ENCODE measurements at regions of chr7 and their contacts with region 1.

Region 1: GRCh38 chr7:2567679-2568278 is 9.0 kb downstream of the IQCE start:
- DNase-seq: peak; percentile 31 to 71
- H3K4me3 ChIP-seq: no peak overlapping the region
- H3K27ac ChIP-seq: no peak overlapping the region
- H3K4me1 ChIP-seq: peaks cover 0 to 6% (median 2%) of the 10 kb centered on the region in 4 experiments; a peak in 4 of 7 replicates
- H3K27me3 ChIP-seq: no peaks in the 10 kb centered on the region
- CTCF ChIP-seq: peak; percentile 72 to 83 (median 77)
- EP300 ChIP-seq: no peak
- POLR2A ChIP-seq: no peak
- RAD21 ChIP-seq: peak; percentile 91 to 94

Region 2: DNA sequence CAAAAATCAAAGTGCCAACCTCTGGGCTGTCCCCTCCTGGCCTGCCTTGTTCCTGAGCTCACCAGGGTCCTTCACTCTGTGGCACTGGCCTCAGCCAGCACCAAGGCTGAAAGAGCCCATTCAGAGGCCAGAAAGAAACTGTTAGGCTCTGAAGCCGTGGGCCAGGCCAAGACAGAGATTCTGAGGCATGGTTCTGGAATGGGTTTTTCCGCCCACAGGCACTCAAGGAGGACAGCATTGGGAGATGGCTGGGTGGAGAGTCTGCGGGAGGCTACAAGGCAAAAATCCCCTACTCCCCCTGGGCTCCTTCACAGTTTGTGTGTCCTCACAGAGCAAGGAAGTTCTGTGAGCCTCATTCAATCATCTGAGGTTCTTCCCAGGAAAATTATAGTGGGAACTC is 123.3 kb before region 1 on chr7:
- CTCF ChIA-PET with region 1: no interaction called
- POLR2A ChIA-PET with region 1: no interaction called
- DNase-seq: no peak
- H3K4me3 ChIP-seq: no peak overlapping the region
- H3K27ac ChIP-seq: no peak overlapping the region
- H3K4me1 ChIP-seq: no peaks in the 10 kb centered on the region
- H3K27me3 ChIP-seq: no peaks in the 10 kb centered on the region
- CTCF ChIP-seq: no peak
- EP300 ChIP-seq: no peak
- POLR2A ChIP-seq: no peak
- RAD21 ChIP-seq: no peak

Region 3: DNA sequence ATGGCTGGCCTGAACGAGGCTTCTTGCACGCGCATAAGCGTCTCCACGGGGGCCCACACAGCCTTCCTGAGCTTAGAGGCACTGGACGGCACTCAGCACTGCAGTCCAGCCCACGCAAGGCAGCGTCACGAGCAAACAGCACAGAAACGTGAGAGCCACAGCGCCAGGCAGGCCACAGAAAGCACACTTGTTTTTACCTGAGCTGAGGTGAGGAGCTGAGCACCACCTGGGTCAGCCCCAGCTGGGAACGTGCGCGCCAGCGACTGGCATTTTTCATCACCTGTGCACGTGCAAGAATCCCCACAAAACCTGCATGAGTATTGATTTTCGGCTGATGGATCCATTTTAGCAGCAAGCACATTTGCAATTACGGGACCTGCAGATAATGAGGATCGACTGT is 17.7 kb after region 1 on chr7:
- CTCF ChIA-PET with region 1: interaction called, 13 read pairs
- POLR2A ChIA-PET with region 1: no interaction called
- DNase-seq: no peak
- H3K4me3 ChIP-seq: no peak overlapping the region
- H3K27ac ChIP-seq: no peak overlapping the region
- H3K4me1 ChIP-seq: peaks cover 0 to 11% (median 3%) of the 10 kb centered on the region in 4 experiments; a peak in 3 of 7 replicates
- H3K27me3 ChIP-seq: no peaks in the 10 kb centered on the region
- CTCF ChIP-seq: no peak
- EP300 ChIP-seq: no peak
- POLR2A ChIP-seq: no peak
- RAD21 ChIP-seq: no peak

Region 4: DNA sequence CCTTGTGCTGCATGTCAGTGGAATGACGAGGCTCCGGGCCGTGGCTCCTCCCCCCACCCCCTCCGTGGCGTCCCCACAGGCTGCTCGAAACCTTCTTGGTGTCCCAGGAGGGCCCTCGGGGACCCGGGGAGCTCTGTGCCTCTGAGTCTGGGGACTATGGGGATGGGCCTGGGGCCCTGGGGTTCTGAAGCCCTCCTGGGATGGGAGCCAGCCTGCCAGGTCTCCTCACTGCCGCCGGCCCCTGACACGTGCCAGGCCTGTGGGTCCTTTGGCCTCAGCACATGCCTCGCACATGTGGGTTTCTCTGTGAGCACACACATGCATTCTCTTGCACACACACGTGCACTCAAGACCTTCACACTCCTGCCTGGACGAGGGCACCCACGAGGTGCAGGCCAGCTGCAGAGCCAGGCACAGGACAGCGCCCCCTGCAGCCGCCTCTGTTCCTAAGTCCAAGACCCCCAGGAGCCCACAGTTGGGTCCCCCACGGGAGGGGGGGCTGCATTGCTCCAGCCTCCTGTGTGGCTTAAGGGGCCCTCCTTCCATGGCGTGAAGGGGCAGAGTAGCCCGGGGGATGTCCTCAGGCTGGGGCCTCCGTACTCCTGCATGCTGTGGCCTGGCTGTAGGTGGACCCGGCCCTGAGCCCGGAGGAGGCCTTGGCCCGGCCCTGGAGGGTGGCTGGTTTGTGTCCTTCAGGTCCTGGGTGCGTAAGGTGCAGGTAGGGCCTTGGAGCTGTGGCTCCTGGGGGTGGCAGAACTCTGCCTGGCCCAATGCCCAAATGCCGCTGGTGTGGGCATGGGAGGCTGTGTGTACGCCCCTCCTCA is 93.0 kb after region 1 on chr7:
- CTCF ChIA-PET with region 1: interaction called, 27 read pairs
- POLR2A ChIA-PET with region 1: no interaction called
- DNase-seq: peak in 1 of 2 experiments; percentile 71
- H3K4me3 ChIP-seq: no peak overlapping the region
- H3K27ac ChIP-seq: no peak overlapping the region
- H3K4me1 ChIP-seq: peaks cover 0 to 4% (median under 1%) of the 10 kb centered on the region in 4 experiments; a peak in 2 of 7 replicates
- H3K27me3 ChIP-seq: no peaks in the 10 kb centered on the region; a peak in 2 of 7 replicates
- CTCF ChIP-seq: peak in 2 of 3 experiments; percentile 50 to 60; a peak in 3 of 4 replicates
- EP300 ChIP-seq: no peak
- POLR2A ChIP-seq: no peak
- RAD21 ChIP-seq: peak; percentile 34 to 48; a peak in 3 of 4 replicates

Region 5: GRCh38 chr7:2886900-2887299 is 319.1 kb after region 1 on chr7:
- CTCF ChIA-PET with region 1: no interaction called
- POLR2A ChIA-PET with region 1: no interaction called
- DNase-seq: no peak
- H3K4me3 ChIP-seq: no peak overlapping the region
- H3K27ac ChIP-seq: no peak overlapping the region
- H3K4me1 ChIP-seq: peaks cover 0 to 7% (median 4%) of the 10 kb centered on the region in 4 experiments; a peak in 3 of 7 replicates
- H3K27me3 ChIP-seq: no peaks in the 10 kb centered on the region
- CTCF ChIP-seq: peak; percentile 84 to 92 (median 89)
- EP300 ChIP-seq: no peak
- POLR2A ChIP-seq: no peak
- RAD21 ChIP-seq: peak; percentile 94 to 95

Measured in H1 (cell line).